ENCODE measurements at regions of chr20 and their contacts with region 1.

Region 1: DNA sequence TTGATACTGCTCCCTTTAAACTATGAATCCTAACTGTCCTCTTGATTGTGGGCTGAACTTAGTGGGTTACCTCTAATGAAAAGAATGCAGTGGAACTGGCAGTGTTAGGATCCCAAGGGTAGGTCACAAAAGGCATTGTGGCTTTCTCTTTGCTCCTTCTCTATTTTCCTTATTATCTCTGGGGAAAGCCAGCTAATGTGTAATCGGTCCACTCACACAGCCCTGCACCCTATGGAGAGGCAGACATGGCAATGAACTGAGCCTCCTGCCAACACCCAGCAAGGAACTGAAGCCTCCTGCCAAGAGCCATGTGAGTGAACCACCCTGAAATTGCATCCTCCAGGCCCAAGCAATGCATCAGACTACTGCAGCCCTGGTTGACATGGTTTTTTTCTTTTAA is 24.6 kb upstream of the ZNF133 start:
- H3K4me3 ChIP-seq: no peak overlapping the region
- H3K27ac ChIP-seq: no peak overlapping the region
- H3K4me1 ChIP-seq: no peaks in the 10 kb centered on the region
- CTCF ChIP-seq: no peak

Region 2: GRCh38 chr20:18276821-18277220 is 13.1 kb after region 1 on chr20:
- CTCF ChIA-PET with region 1: interaction called, 16 read pairs
- POLR2A ChIA-PET with region 1: no interaction called
- H3K4me3 ChIP-seq: no peak overlapping the region
- H3K27ac ChIP-seq: no peak overlapping the region
- H3K4me1 ChIP-seq: no peaks in the 10 kb centered on the region
- CTCF ChIP-seq: peak; percentile 86

Measured in HEK293 (cell line).